ENCODE measurements at regions of chr5 and their contacts with region 1.

Region 1: DNA sequence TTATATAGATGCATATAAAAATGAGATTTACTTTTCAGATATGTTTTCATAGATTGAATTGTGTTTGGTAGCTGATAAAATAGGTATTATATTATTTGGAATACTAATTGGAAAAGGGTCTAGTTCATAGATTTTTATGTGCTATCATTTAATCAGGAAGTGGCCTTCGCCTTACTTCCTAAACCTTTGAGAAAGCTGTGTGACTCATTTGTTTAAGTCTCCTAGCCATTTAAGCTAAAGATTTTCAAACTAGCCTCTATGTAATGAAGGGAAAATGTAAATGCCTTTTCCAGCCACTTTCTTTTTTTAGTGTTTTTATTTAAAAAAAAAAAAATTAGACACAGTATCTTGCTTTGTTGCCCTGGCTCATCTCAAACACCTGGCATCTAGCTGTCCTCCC is 97.5 kb downstream of the DMXL1 start:
- DNase-seq: peak; percentile 51
- ATAC-seq: peak; percentile 27; the same call in 1 of the 2 replicates
- H3K4me3 ChIP-seq: no peak overlapping the region
- H3K27ac ChIP-seq: peak overlapping the region; percentile 25; the same call in 1 of the 2 replicates
- H3K4me1 ChIP-seq: peaks cover 3% of the 10 kb centered on the region; the same call in 1 of the 2 replicates
- H3K27me3 ChIP-seq: no peaks in the 10 kb centered on the region
- CTCF ChIP-seq: no peak
- POLR2A ChIP-seq: no peak
- RAD21 ChIP-seq: no peak

Region 2: GRCh38 chr5:119207105-119207504 is 38.7 kb after region 1 on chr5:
- CTCF ChIA-PET with region 1: no interaction called
- POLR2A ChIA-PET with region 1: no interaction called
- dilution Hi-C with region 1: no loop called
- in situ Hi-C with region 1: no loop called
- intact Hi-C with region 1: loop called (anchors 5 kb)
- DNase-seq: no peak
- ATAC-seq: no peak
- H3K4me3 ChIP-seq: no peak overlapping the region
- H3K27ac ChIP-seq: no peak overlapping the region
- H3K4me1 ChIP-seq: no peaks in the 10 kb centered on the region
- H3K27me3 ChIP-seq: no peaks in the 10 kb centered on the region
- CTCF ChIP-seq: no peak
- POLR2A ChIP-seq: no peak
- RAD21 ChIP-seq: no peak

Region 3: DNA sequence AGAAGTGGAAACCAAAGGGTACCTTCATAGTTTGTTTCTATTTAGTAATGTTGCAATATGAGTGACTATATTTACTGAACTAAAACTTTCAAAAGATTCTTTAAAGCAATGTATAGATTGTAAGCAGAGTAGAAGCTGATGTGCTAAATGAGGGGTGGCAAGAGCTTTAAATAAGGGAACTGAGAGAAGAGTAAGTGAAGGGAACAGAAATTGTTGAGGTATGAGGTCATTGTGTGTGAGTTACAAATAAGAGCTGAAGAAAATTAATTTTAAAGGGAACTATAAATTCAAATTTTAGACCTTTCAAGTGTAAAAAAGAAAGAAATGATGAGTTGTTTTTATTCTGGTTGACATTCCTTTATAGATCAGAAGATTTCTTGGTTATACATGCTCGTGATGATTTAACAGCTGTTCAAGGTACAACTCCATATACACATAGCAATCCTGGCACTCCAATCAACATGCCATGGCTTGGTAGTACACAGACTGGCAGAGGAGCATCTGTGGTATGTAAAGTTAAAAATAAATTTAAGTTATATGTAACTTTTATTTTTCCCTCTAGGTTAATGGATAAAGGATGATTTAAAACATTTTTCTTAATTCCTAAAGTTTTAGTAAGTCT is 52.3 kb after region 1 on chr5:
- CTCF ChIA-PET with region 1: no interaction called
- POLR2A ChIA-PET with region 1: no interaction called
- dilution Hi-C with region 1: no loop called
- in situ Hi-C with region 1: no loop called
- intact Hi-C with region 1: no loop called
- DNase-seq: peak; percentile 4
- ATAC-seq: no peak
- H3K4me3 ChIP-seq: no peak overlapping the region
- H3K27ac ChIP-seq: no peak overlapping the region
- H3K4me1 ChIP-seq: peaks cover 2% of the 10 kb centered on the region; the same call in 1 of the 2 replicates
- H3K27me3 ChIP-seq: no peaks in the 10 kb centered on the region
- CTCF ChIP-seq: no peak
- POLR2A ChIP-seq: no peak
- RAD21 ChIP-seq: no peak

Region 4: GRCh38 chr5:119570910-119571309 is 402.5 kb after region 1 on chr5:
- CTCF ChIA-PET with region 1: no interaction called
- POLR2A ChIA-PET with region 1: no interaction called
- dilution Hi-C with region 1: no loop called
- in situ Hi-C with region 1: no loop called
- intact Hi-C with region 1: no loop called
- DNase-seq: no peak
- ATAC-seq: no peak
- H3K4me3 ChIP-seq: no peak overlapping the region
- H3K27ac ChIP-seq: no peak overlapping the region
- H3K4me1 ChIP-seq: no peaks in the 10 kb centered on the region
- H3K27me3 ChIP-seq: peaks cover 2% of the 10 kb centered on the region; the same call in 1 of the 2 replicates
- CTCF ChIP-seq: no peak
- POLR2A ChIP-seq: no peak
- RAD21 ChIP-seq: no peak

Measured in IMR-90 (cell line).